H1 (cell line): ENCODE measurements at regions of chr11 and their contacts with region 1.

Region 1: GRCh38 chr11:2196970-2197770 is 25.6 kb upstream of the TH start:
- DNase-seq: peak; percentile 41 to 88
- H3K4me3 ChIP-seq: no peak overlapping the region
- H3K27ac ChIP-seq: no peak overlapping the region
- H3K4me1 ChIP-seq: no peaks in the 10 kb centered on the region
- H3K27me3 ChIP-seq: no peaks in the 10 kb centered on the region; a peak in 1 of 7 replicates
- CTCF ChIP-seq: peak; percentile 88 to 99 (median 97)
- EP300 ChIP-seq: no peak
- POLR2A ChIP-seq: no peak
- RAD21 ChIP-seq: peak; percentile 96 to 99

Region 2: GRCh38 chr11:2077061-2077802 is 119.9 kb before region 1 on chr11:
- CTCF ChIA-PET with region 1: no interaction called
- POLR2A ChIA-PET with region 1: no interaction called
- DNase-seq: no peak
- H3K4me3 ChIP-seq: no peak overlapping the region
- H3K27ac ChIP-seq: no peak overlapping the region
- H3K4me1 ChIP-seq: no peaks in the 10 kb centered on the region
- H3K27me3 ChIP-seq: no peaks in the 10 kb centered on the region; a peak in 3 of 7 replicates
- CTCF ChIP-seq: no peak
- EP300 ChIP-seq: no peak
- POLR2A ChIP-seq: no peak
- RAD21 ChIP-seq: no peak

Region 3: DNA sequence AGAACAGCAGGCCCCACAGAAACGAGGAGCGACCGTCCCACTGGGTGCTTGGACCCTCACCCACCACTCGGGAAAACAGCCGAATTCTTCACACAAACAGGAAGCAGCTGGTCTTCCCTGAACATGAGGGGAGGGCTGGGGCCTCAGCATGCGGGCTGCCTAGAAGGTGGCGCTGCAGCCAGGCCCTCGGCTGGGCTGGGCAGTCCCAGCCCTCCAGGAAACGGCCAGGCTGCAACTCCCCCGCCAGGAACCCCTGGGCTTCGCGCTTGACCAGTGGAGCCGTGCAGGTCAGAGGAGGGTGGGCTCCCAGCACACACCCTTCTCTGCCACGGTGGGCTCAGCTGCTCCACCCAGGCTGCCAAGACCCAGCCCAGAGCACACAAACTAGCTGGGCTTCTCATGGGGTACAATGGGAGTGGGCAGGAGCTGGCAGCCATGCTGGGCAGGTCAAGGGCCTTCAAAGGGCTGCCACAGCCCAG is 87.6 kb before region 1 on chr11:
- CTCF ChIA-PET with region 1: no interaction called
- POLR2A ChIA-PET with region 1: no interaction called
- DNase-seq: no peak
- H3K4me3 ChIP-seq: no peak overlapping the region
- H3K27ac ChIP-seq: no peak overlapping the region
- H3K4me1 ChIP-seq: peaks cover 0 to 7% (median 1%) of the 10 kb centered on the region in 4 experiments; a peak in 3 of 7 replicates
- H3K27me3 ChIP-seq: no peaks in the 10 kb centered on the region
- CTCF ChIP-seq: no peak
- EP300 ChIP-seq: no peak
- POLR2A ChIP-seq: no peak
- RAD21 ChIP-seq: no peak

Region 4: DNA sequence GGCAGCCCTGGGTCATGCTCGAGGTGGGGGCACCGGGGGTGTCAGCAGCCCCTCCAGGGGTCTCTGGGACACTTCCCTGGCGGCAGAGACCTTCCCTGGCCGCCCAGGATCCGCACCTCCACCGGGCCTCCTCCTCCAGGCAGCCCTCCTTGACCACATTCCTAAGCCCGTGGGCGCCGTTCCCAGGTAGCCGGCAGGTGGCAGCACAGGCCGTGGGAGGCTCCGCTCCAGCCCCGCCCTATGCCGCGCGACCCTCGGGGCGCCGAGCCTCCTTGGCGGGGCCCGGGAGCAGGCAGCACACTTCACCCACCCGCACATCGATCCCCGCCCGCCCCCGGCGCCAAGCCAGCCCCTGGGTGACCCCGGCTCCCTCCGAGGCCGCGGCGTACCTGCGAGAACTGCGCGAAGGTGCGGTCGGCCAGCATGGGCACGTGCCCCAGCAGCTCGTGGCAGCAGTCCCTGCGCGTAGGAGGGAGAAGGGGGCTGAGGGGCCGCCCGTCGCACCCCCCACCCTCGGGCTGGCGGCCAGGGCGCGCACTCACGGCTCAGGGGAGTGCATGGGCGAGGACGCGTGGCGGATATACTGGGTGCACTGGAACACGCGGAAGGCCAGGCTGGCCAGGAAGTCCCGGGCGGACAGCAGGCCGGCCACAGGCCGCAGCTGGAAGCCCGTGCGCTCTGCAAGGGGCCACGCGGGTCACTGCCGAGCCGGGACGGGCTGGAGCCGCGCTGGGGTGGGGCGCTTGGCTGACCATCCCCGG is 30.9 kb before region 1 on chr11:
- CTCF ChIA-PET with region 1: interaction called, 11 read pairs
- POLR2A ChIA-PET with region 1: no interaction called
- DNase-seq: peak in 1 of 2 experiments; percentile 90
- H3K4me3 ChIP-seq: peak overlapping the region in 1 of 4 experiments; percentile 35; a peak in 1 of 8 replicates
- H3K27ac ChIP-seq: no peak overlapping the region
- H3K4me1 ChIP-seq: peaks cover 0 to 6% (median 1%) of the 10 kb centered on the region in 4 experiments; a peak in 2 of 7 replicates
- H3K27me3 ChIP-seq: peaks cover 0 to 14% (median 0%) of the 10 kb centered on the region in 4 experiments; a peak in 3 of 7 replicates
- CTCF ChIP-seq: peak in 2 of 3 experiments; percentile 76 to 77; a peak in 3 of 4 replicates
- EP300 ChIP-seq: no peak
- POLR2A ChIP-seq: no peak
- RAD21 ChIP-seq: peak; percentile 54 to 75

Region 5: GRCh38 chr11:2178906-2179494 is 18.2 kb before region 1 on chr11:
- CTCF ChIA-PET with region 1: interaction called, 19 read pairs
- POLR2A ChIA-PET with region 1: no interaction called
- DNase-seq: no peak
- H3K4me3 ChIP-seq: no peak overlapping the region
- H3K27ac ChIP-seq: no peak overlapping the region
- H3K4me1 ChIP-seq: no peaks in the 10 kb centered on the region
- H3K27me3 ChIP-seq: no peaks in the 10 kb centered on the region
- CTCF ChIP-seq: no peak
- EP300 ChIP-seq: no peak
- POLR2A ChIP-seq: no peak
- RAD21 ChIP-seq: no peak

Region 6: GRCh38 chr11:2208691-2209369 is 11.7 kb after region 1 on chr11:
- CTCF ChIA-PET with region 1: interaction called, 30 read pairs
- POLR2A ChIA-PET with region 1: interaction called, 3 read pairs
- DNase-seq: peak in 1 of 2 experiments; percentile 48
- H3K4me3 ChIP-seq: no peak overlapping the region
- H3K27ac ChIP-seq: no peak overlapping the region
- H3K4me1 ChIP-seq: peaks cover 5 to 11% (median 8%) of the 10 kb centered on the region in 4 experiments
- H3K27me3 ChIP-seq: peaks cover 0 to 6% (median 1%) of the 10 kb centered on the region in 4 experiments; a peak in 4 of 7 replicates
- CTCF ChIP-seq: peak; percentile 25 to 48 (median 47)
- EP300 ChIP-seq: no peak
- POLR2A ChIP-seq: no peak
- RAD21 ChIP-seq: peak; percentile 45 to 52

Region 7: GRCh38 chr11:2277008-2277346 is 79.8 kb after region 1 on chr11:
- CTCF ChIA-PET with region 1: interaction called, 26 read pairs
- POLR2A ChIA-PET with region 1: no interaction called
- DNase-seq: peak in 1 of 2 experiments; percentile 43
- H3K4me3 ChIP-seq: no peak overlapping the region
- H3K27ac ChIP-seq: no peak overlapping the region
- H3K4me1 ChIP-seq: peaks cover 0 to 8% (median 1%) of the 10 kb centered on the region in 4 experiments; a peak in 3 of 7 replicates
- H3K27me3 ChIP-seq: peaks cover 0 to 25% (median 21%) of the 10 kb centered on the region in 4 experiments; a peak in 6 of 7 replicates
- CTCF ChIP-seq: no peak
- EP300 ChIP-seq: no peak
- POLR2A ChIP-seq: no peak
- RAD21 ChIP-seq: no peak

Region 8: GRCh38 chr11:2298795-2299761 is 101.9 kb after region 1 on chr11:
- CTCF ChIA-PET with region 1: interaction called, 248 read pairs
- POLR2A ChIA-PET with region 1: interaction called, 4 read pairs
- DNase-seq: peak; percentile 25 to 68
- H3K4me3 ChIP-seq: no peak overlapping the region
- H3K27ac ChIP-seq: no peak overlapping the region
- H3K4me1 ChIP-seq: no peaks in the 10 kb centered on the region
- H3K27me3 ChIP-seq: peaks cover 0 to 2% (median 0%) of the 10 kb centered on the region in 4 experiments; a peak in 1 of 7 replicates
- CTCF ChIP-seq: peak; percentile 77 to 87 (median 80)
- EP300 ChIP-seq: no peak
- POLR2A ChIP-seq: no peak
- RAD21 ChIP-seq: peak; percentile 92